ENCODE measurements at regions of chr7 and their contacts with region 1.

Region 1: GRCh38 chr7:91784463-91784862 is 96.0 kb downstream of the MTERF1 start:
- DNase-seq: no peak
- ATAC-seq: peak in 1 of 4 donors; percentile 60
- H3K4me3 ChIP-seq: no peak overlapping the region
- H3K27ac ChIP-seq: no peak overlapping the region
- H3K4me1 ChIP-seq: no peaks in the 10 kb centered on the region
- H3K27me3 ChIP-seq: no peaks in the 10 kb centered on the region
- CTCF ChIP-seq: peak in 11 of 12 donors; percentile 8 to 62 (median 41)
- POLR2A ChIP-seq: no peak

Region 2: DNA sequence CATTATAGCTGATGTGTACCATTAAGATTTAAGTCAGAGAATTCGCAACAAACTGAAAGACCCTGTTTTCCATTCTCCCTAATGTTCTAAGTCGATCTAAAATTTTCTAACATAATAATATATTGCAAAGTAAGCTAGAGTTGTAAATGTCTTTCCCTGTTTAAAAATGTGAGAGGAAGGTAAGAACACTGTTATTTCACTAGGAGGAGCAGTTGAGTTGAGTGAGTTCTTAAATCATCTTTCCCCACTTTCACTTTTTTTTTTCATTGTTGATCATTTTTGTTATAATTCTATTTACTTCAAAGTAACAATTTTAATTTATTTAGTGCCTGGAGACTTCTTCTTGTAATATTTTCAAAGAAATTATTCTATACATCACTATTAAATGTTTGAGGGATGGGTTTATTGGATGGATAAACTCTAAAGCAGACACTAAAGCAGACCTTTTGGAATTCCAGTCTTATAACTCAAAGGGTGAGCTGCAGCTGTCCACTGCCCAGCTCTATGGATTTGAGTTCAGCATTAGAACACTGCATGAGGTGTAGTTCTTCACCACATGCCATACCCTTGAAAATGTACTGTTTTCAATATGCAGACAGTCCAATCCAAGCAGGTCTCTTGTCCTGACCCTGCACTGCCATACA is 701.5 kb before region 1 on chr7:
- intact Hi-C with region 1: loop called in 8 of 10 experiments (anchors 5 to 10 kb)
- DNase-seq: no peak
- ATAC-seq: peak in 1 of 4 donors; percentile 55
- H3K4me3 ChIP-seq: no peak overlapping the region
- H3K27ac ChIP-seq: peak overlapping the region in 7 of 12 donors; percentile 11 to 68 (median 48)
- H3K4me1 ChIP-seq: peaks cover 0 to 44% (median 25%) of the 10 kb centered on the region in 12 donors
- H3K27me3 ChIP-seq: no peaks in the 10 kb centered on the region
- CTCF ChIP-seq: peak; percentile 30 to 71 (median 56)
- POLR2A ChIP-seq: no peak

Region 3: DNA sequence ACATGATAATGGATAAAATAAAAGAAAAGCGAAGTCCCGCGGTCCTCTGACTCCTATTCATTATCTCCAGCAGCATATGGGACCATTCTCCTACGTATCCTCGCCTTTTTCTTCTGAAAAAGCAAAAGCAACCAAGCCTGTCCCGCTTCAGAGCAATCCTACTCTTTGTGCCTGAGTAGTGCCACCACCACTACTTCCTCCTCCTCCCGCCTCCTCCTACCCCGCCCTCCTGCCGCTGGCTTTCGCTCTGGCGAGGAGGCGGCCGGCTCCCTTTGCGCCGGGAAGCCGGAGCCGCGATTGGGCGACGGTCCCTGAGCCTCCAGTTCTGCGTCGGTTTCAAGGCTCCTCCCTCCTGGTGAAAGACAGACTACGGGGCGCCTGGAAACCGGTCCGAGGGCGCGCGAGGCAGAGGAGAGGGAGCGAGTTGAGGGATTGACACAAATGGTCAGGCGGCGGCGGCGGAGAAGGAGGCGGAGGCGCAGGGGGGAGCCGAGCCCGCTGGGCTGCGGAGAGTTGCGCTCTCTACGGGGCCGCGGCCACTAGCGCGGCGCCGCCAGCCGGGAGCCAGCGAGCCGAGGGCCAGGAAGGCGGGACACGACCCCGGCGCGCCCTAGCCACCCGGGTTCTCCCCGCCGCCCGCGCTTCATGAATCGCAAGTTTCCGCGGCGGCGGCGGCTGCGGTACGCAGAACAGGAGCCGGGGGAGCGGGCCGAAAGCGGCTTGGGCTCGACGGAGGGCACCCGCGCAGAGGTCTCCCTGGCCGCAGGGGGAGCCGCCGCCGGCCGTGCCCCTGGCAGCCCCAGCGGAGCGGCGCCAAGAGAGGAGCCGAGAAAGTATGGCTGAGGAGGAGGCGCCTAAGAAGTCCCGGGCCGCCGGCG is 520.2 kb before region 1 on chr7 and contains the start of gene FZD1:
- intact Hi-C with region 1: loop called in 2 of 10 experiments (anchors 5 kb)
- DNase-seq: peak; percentile 97 to 98 (median 97)
- ATAC-seq: peak; percentile 95 to 97 (median 97)
- H3K4me3 ChIP-seq: peak within 1 kb of the TSS; percentile 77 to 95 (median 86)
- H3K27ac ChIP-seq: peak within 1 kb of the TSS; percentile 91 to 97 (median 95)
- H3K4me1 ChIP-seq: peaks cover 0 to 35% (median 18%) of the 10 kb centered on the region in 12 donors
- H3K27me3 ChIP-seq: peaks cover 0 to 15% (median 0%) of the 10 kb centered on the region in 9 donors
- CTCF ChIP-seq: peak in 3 of 12 donors; percentile 5 to 30 (median 19)
- POLR2A ChIP-seq: peak in 1 of 2 donors; percentile 87
- total RNA-seq, gene FZD1: 11.5 to 29.8 (median 17.9) TPM

Region 4: GRCh38 chr7:91288208-91288824 is 496.1 kb before region 1 on chr7:
- intact Hi-C with region 1: loop called in 4 of 10 experiments (anchors 5 to 10 kb)
- DNase-seq: peak; percentile 37 to 61 (median 45)
- ATAC-seq: no peak
- H3K4me3 ChIP-seq: no peak overlapping the region
- H3K27ac ChIP-seq: no peak overlapping the region
- H3K4me1 ChIP-seq: peaks cover 0 to 5% (median 0%) of the 10 kb centered on the region in 12 donors
- H3K27me3 ChIP-seq: peaks cover 0 to 3% (median 0%) of the 10 kb centered on the region in 9 donors
- CTCF ChIP-seq: peak; percentile 21 to 61 (median 46)
- POLR2A ChIP-seq: no peak